Right lobe of liver (tissue), 6 donors: ENCODE measurements at regions of chr14 and their contacts with region 1.

Region 1: DNA sequence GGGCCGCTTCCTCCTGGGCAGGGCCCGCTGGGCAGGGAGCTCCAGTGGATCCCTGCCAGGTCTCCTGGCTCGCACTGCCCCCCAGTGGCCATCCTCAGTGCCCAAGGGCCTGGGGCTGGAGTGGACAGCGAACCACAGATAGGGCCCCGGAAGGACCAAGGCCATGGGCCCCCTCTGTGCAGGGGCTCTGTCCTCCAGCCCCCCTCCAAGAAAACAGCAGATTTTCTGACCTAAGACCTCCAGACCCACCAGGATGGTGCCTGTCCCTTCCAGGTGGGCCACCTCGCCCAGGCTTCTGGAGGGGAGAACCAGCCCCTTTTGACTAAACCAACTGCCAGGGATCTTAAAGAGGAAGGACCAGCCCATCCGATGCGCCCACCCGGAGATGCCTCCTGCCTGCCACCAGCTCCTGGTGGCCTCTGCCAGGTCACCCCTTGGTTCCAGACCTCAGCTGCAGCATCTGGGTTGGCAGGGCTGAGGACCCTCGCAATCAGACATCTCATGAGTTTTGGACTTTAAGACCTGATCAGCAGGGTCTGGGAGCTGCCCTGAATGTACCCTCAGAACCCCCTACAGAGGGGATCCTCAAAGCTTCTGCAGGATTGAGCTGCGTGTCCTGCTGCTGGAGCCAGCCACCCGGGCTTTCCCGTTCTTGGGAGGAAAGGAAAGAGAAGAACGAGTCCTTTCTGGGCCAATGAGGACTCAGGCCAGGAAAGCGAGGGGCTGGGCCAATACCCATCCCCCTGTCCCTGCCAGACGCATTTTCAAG is 325.8 kb upstream of the DIO3 start:
- DNase-seq: peak; percentile 72 to 78 (median 78)
- ATAC-seq: peak; percentile 88 to 96 (median 92)
- H3K4me3 ChIP-seq: no peak overlapping the region
- H3K27ac ChIP-seq: no peak overlapping the region
- H3K4me1 ChIP-seq: no peaks in the 10 kb centered on the region
- H3K27me3 ChIP-seq: no peaks in the 10 kb centered on the region
- CTCF ChIP-seq: peak; percentile 71 to 91 (median 85)
- POLR2A ChIP-seq: no peak

Region 2: DNA sequence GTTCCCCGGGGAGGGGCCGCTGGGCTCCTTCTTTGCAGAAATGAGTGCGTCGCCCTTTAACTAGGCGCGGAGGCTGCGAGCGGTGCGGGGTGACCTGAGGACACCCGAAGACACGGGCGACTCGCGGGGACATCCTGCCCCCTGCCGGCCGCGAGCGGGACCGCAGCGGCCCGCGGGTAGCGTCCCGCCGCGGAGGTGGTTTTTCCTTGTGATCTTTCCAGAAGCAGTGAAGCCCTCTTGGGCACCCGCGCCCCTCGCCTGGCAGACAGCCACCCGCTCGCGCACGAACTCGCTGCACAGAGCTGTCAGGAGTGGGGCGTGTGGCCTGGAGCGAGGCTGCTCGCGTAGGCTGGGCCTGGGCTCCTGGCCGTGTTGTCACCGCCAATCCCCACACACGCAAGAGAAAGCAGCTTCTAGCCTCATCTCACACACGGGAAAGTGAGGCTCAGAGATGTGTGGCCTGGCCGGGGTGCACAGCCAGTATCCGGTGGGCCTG is 393.0 kb after region 1 on chr14:
- intact Hi-C with region 1: loop called in 1 of 2 experiments (anchors 10 kb)
- DNase-seq: peak; percentile 77 to 79 (median 78)
- ATAC-seq: peak; percentile 93 to 99 (median 98)
- H3K4me3 ChIP-seq: peak overlapping the region in 1 of 3 donors; percentile 27
- H3K27ac ChIP-seq: no peak overlapping the region
- H3K4me1 ChIP-seq: peaks cover 0 to 7% (median 0%) of the 10 kb centered on the region in 4 donors
- H3K27me3 ChIP-seq: no peaks in the 10 kb centered on the region
- CTCF ChIP-seq: peak; percentile 98 to 100 (median 99)
- POLR2A ChIP-seq: no peak